ENCODE measurements at regions of chr12 and their contacts with region 1.

Region 1: GRCh38 chr12:89352492-89353187 is at the start of gene DUSP6:
- DNase-seq: peak; percentile 96
- H3K4me3 Mint-ChIP-seq: peak within 1 kb of the TSS; percentile 97
- H3K27ac Mint-ChIP-seq: peak within 1 kb of the TSS; percentile 97
- H3K4me1 Mint-ChIP-seq: peaks cover 38% of the 10 kb centered on the region
- H3K27me3 Mint-ChIP-seq: no peaks in the 10 kb centered on the region
- total RNA-seq, gene DUSP6: 75.7 and 82.0 TPM in 2 replicates

Region 2: GRCh38 chr12:88241862-88242570 is 1110.6 kb before region 1 on chr12:
- intact Hi-C with region 1: no loop called
- DNase-seq: no peak
- H3K4me3 Mint-ChIP-seq: no peak overlapping the region
- H3K27ac Mint-ChIP-seq: peak overlapping the region; percentile 93
- H3K4me1 Mint-ChIP-seq: peaks cover 42% of the 10 kb centered on the region
- H3K27me3 Mint-ChIP-seq: no peaks in the 10 kb centered on the region

Region 3: DNA sequence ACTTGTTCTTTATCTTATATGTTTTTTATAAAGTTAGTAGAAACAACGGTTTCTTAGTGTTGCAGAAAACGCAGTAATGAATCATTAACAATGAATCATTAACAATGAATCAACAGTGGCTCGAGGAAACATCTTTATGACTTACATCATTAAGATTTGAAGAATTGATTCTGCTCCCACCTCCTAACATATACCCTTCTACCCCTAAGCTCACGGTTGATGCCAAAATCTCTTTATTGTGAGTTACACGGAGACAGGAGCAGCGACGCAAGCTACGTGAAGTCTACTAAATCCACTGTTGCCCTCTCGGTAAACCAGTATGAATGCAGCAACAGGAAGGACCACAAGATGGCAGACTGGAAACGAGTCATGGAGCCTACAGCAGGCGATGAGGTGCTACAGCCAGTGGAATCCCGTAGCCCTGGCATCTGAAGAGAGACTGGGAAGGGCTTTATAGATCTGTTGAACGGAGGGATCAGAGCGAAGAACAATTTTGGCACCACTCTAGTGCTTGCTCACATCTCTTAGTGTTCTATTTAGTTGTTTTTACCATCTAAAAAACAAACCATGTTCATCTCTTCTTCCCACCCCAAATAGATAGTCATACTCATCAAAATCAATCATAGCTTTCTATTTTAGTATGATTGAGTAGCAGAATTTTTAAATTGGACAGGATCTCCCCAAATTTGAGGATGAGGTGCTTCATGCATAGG is 333.1 kb before region 1 on chr12:
- intact Hi-C with region 1: loop called (anchors 1 kb)
- DNase-seq: peak; percentile 75
- H3K4me3 Mint-ChIP-seq: no peak overlapping the region
- H3K27ac Mint-ChIP-seq: no peak overlapping the region
- H3K4me1 Mint-ChIP-seq: peaks cover 27% of the 10 kb centered on the region
- H3K27me3 Mint-ChIP-seq: peaks cover 1% of the 10 kb centered on the region

Region 4: DNA sequence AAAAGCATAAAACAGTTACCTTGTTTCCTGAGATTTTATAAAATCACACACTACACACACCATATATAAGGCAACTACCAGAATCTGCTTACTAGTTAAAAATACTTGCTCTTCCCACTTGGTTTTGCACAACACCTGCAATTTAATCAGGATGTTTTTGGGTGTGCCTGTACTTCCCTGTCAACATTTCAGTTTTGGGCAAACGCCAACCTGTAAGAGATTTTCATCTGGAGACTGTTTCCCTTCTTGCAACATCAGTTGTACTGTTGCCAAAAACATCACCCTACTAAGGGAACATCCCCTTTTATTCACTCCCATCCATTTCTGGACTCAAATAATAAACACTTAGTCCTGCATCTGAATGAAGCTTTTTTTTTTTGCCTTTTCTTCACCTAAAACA is 172.7 kb before region 1 on chr12:
- intact Hi-C with region 1: loop called (anchors 1 kb)
- DNase-seq: no peak
- H3K4me3 Mint-ChIP-seq: peak overlapping the region; percentile 50
- H3K27ac Mint-ChIP-seq: peak overlapping the region; percentile 86
- H3K4me1 Mint-ChIP-seq: peaks cover 71% of the 10 kb centered on the region
- H3K27me3 Mint-ChIP-seq: no peaks in the 10 kb centered on the region

Region 5: GRCh38 chr12:89244536-89244935 is 108.1 kb before region 1 on chr12:
- intact Hi-C with region 1: loop called (anchors 1 kb)
- DNase-seq: peak; percentile 47
- H3K4me3 Mint-ChIP-seq: peak overlapping the region; percentile 35
- H3K27ac Mint-ChIP-seq: peak overlapping the region; percentile 85
- H3K4me1 Mint-ChIP-seq: peaks cover 67% of the 10 kb centered on the region
- H3K27me3 Mint-ChIP-seq: no peaks in the 10 kb centered on the region

Region 6: GRCh38 chr12:89319122-89319521 is 33.5 kb before region 1 on chr12:
- intact Hi-C with region 1: no loop called
- DNase-seq: no peak
- H3K4me3 Mint-ChIP-seq: no peak overlapping the region
- H3K27ac Mint-ChIP-seq: no peak overlapping the region
- H3K4me1 Mint-ChIP-seq: peaks cover 27% of the 10 kb centered on the region
- H3K27me3 Mint-ChIP-seq: no peaks in the 10 kb centered on the region

Region 7: GRCh38 chr12:89373763-89374572 is 21.3 kb after region 1 on chr12:
- intact Hi-C with region 1: loop called (anchors 1 kb)
- DNase-seq: no peak
- H3K4me3 Mint-ChIP-seq: no peak overlapping the region
- H3K27ac Mint-ChIP-seq: no peak overlapping the region
- H3K4me1 Mint-ChIP-seq: peaks cover 50% of the 10 kb centered on the region
- H3K27me3 Mint-ChIP-seq: no peaks in the 10 kb centered on the region

Region 8: DNA sequence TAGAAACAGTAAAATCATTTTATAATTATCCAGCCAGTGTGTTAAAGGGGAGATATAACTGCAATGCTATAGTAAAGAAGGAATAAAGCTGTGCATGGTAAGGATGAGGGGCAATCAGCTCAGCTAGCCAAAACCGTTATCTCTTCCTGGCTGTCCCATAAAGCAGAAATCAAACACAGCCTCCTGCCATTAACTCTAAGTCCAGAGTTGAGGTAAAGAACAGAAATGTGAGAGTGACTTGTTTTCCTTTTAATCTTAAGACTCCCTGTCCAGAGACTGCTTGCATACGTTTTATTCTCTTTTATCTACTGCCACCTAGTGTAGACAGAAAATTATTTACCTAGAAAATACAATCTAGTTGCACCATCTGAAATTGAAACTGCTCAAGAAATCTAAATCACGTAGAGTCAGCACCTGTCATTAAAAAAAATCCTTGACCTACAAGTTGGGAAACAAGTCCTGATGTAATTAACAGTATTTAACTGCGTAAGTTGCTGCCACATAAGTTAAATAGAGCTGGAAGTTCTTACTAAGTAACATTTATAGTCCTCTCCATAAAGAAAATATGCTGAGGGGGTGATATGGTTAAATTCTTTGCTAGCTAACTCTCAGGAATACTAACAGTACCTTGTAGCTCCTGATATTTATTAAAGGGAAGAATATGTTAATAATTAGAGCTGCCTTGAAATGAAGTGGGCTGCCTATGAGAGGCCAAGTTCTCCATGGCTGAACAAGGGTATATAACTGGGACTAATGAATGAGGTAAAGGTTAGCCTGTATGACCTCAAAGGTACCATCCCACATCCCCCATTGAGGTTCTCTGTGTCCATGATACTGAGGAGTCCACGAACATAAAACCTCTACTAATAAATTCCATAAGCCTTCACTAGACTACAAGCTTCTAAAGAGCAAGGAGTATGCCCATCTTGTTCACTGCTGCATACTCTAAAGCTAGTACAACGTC is 109.3 kb after region 1 on chr12:
- intact Hi-C with region 1: loop called (anchors 2 kb)
- DNase-seq: no peak
- H3K4me3 Mint-ChIP-seq: peak overlapping the region; percentile 60
- H3K27ac Mint-ChIP-seq: peak overlapping the region; percentile 66
- H3K4me1 Mint-ChIP-seq: peaks cover 55% of the 10 kb centered on the region
- H3K27me3 Mint-ChIP-seq: no peaks in the 10 kb centered on the region

Region 9: GRCh38 chr12:89494411-89495231 is 142.0 kb after region 1 on chr12:
- intact Hi-C with region 1: loop called (anchors 1 kb)
- DNase-seq: no peak
- H3K4me3 Mint-ChIP-seq: peak overlapping the region; percentile 9
- H3K27ac Mint-ChIP-seq: peak overlapping the region; percentile 90
- H3K4me1 Mint-ChIP-seq: peaks cover 17% of the 10 kb centered on the region
- H3K27me3 Mint-ChIP-seq: no peaks in the 10 kb centered on the region

Region 10: DNA sequence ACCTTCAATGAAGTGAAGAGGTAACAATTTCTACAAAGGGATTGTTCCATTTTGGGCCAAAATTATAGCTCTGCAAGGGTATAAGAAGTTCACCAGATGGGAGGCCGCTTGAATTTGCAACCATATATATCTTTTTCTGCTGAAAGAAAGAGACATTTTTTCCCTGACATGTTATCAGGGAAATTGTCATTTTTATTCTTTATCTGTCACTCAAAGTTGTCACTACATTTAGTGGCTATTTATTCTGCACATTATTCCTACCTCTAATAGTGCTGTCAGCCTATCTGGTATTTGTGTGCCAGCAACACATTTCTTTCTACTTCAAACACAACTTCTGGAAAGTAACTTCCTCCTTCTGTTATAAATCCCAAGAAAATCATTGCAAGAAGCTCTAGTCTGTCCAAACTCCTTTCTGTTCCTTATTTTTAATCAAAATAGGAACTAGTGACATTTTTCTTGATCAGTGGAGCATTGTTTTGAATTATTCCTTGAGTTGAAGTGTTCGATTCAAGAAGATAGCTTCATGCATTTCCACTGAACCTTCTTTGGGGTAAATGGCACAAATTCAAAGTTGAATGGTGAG is 493.9 kb after region 1 on chr12:
- intact Hi-C with region 1: no loop called
- DNase-seq: no peak
- H3K4me3 Mint-ChIP-seq: no peak overlapping the region
- H3K27ac Mint-ChIP-seq: no peak overlapping the region
- H3K4me1 Mint-ChIP-seq: no peaks in the 10 kb centered on the region
- H3K27me3 Mint-ChIP-seq: peaks cover 20% of the 10 kb centered on the region